ENCODE measurements at regions of chr1 and their contacts with region 1.

Region 1: GRCh38 chr1:156146020-156146768 is 7.2 kb upstream of the SEMA4A start:
- DNase-seq: peak; percentile 89
- H3K4me3 ChIP-seq: peak overlapping the region; percentile 40
- H3K27ac ChIP-seq: peak overlapping the region; percentile 95
- H3K4me1 ChIP-seq: peaks cover 41% of the 10 kb centered on the region
- CTCF ChIP-seq: peak; percentile 93

Region 2: DNA sequence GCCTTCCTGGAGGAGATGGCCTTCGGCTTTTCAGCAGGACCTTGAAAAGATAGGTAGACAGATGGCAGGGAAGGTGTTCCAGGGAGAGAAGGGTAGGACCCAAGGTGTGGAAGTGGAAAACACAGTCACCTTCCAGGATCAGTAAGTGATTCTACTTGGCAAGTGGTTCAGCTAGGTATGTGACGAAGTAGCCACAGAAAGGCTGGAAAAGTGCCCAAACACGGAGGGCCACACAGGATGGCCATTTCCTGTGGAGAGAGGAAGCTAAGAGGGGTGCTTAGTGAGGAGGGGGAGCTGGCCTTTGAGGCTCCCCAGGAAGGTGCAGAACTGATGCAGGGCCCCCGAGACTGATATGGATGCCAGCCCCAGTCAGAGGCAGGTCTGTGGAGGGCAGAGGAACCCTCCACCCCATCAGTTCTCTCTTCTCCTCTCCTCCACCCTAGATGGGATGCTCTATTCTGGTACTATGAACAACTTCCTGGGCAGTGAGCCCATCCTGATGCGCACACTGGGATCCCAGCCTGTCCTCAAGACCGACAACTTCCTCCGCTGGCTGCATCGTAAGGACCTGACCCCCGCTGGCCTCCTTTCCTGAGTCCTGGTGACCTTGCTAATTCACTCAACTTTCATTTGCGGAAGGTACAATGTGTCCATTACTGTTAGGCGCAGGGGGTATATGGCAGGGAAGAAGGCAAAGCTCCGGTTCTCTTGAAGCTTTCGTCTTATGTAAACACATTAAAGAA is 14.0 kb after region 1 on chr1:
- CTCF ChIA-PET with region 1: interaction called, 3 read pairs
- POLR2A ChIA-PET with region 1: interaction called, 22 read pairs
- intact Hi-C with region 1: loop called (anchors 1 kb)
- DNase-seq: no peak
- H3K4me3 ChIP-seq: no peak overlapping the region
- H3K27ac ChIP-seq: peak overlapping the region; percentile 95
- H3K4me1 ChIP-seq: peaks cover 50% of the 10 kb centered on the region
- CTCF ChIP-seq: no peak

Region 3: DNA sequence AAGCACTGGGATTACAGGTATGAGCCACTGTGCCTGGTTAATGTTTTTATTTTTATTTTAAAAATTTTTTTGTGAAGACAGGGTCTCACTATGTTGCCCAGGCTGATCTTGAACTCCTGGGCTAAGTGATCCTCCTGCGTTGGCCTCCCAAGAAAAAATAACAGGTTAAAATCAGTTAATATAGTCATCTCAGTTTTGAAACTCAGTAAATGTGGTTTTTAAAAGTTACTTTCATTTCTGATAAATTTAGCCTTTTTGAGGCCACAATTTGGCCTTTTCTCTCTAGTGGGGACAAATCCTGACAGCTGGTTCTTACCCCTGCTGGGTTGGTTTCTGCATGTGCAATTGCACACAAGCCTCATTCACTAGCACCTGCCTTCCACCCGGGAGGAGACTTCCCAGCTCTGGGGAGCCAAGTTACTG is 79.9 kb after region 1 on chr1:
- CTCF ChIA-PET with region 1: interaction called, 9 read pairs
- POLR2A ChIA-PET with region 1: interaction called, 18 read pairs
- intact Hi-C with region 1: loop called (anchors 1 kb)
- DNase-seq: no peak
- H3K4me3 ChIP-seq: no peak overlapping the region
- H3K27ac ChIP-seq: peak overlapping the region; percentile 39
- H3K4me1 ChIP-seq: peaks cover 15% of the 10 kb centered on the region
- CTCF ChIP-seq: no peak

Region 4: DNA sequence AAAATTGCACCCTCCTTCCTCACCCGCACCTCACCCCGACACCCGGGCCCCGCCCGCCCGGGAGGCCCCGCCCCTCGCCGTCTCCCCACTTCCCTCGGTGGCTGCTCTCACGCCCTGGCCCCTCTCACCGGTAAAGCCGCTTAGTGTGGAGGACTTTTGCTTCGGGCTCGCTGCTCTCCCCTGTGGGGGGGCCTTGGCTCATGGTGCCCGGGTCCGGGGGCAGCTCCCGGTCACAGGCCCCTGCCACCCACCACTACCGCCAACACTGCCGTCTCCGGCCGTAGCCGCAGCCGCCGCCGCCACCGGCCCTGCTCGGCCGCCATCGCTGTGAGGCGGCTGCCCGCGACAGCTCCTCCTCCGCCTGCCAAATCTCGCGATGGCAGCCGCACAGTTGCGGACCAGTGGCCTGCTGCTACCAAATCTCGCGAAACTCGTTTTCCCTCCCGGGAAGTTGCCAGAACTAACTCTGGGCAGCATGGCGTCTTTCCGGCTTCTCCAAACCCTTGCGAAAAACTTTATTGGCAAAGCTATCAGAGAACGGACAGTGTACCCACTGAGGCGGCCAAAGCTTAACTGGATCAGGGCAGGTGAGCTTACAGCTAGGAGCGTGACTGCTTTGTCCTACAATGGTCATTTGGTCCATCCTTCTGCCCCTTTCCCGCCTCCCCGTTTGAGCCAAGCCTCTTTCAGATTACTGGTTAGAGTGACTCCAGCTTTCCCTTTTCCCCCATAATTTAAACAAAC is 136.5 kb after region 1 on chr1 and contains the start of gene SMG5:
- CTCF ChIA-PET with region 1: interaction called, 3 read pairs
- POLR2A ChIA-PET with region 1: interaction called, 11 read pairs
- intact Hi-C with region 1: no loop called
- DNase-seq: peak; percentile 99
- H3K4me3 ChIP-seq: peak within 1 kb of the TSS; percentile 82
- H3K27ac ChIP-seq: peak within 1 kb of the TSS; percentile 66
- H3K4me1 ChIP-seq: peaks cover 26% of the 10 kb centered on the region
- CTCF ChIP-seq: no peak
- total RNA-seq, gene SMG5: 87.0 and 87.9 TPM in 2 replicates

Measured in OCI-LY7 (cell line).